B cell (primary cell): ENCODE measurements at regions of chr7 and their contacts with region 1.

Region 1: GRCh38 chr7:152463709-152464311 is 28.0 kb upstream of the KMT2C start:
- DNase-seq: peak; percentile 100
- ATAC-seq: peak; percentile 91
- H3K4me3 ChIP-seq: peak overlapping the region in 4 of 5 experiments; percentile 69 to 99 (median 86)
- H3K4me3 Mint-ChIP-seq: peak overlapping the region; percentile 96
- H3K27ac ChIP-seq: peak overlapping the region; percentile 87 to 96
- H3K27ac Mint-ChIP-seq: peak overlapping the region; percentile 70
- H3K4me1 ChIP-seq: peaks cover 20 to 24% of the 10 kb centered on the region in 2 donors
- H3K4me1 Mint-ChIP-seq: peaks cover 24% of the 10 kb centered on the region
- H3K27me3 ChIP-seq: no peaks in the 10 kb centered on the region
- H3K27me3 Mint-ChIP-seq: no peaks in the 10 kb centered on the region
- CTCF ChIP-seq: no peak

Region 2: GRCh38 chr7:152158801-152159587 is 304.8 kb before region 1 on chr7:
- CTCF ChIA-PET with region 1: no interaction called
- POLR2A ChIA-PET with region 1: no interaction called
- intact Hi-C with region 1: loop called (anchors 5 kb)
- DNase-seq: peak; percentile 86
- ATAC-seq: peak; percentile 90
- H3K4me3 ChIP-seq: peak overlapping the region in 3 of 5 experiments; percentile 18 to 48 (median 36)
- H3K4me3 Mint-ChIP-seq: peak overlapping the region; percentile 67
- H3K27ac ChIP-seq: peak overlapping the region; percentile 86 to 87
- H3K27ac Mint-ChIP-seq: peak overlapping the region; percentile 89
- H3K4me1 ChIP-seq: peaks cover 29 to 31% of the 10 kb centered on the region in 2 donors
- H3K4me1 Mint-ChIP-seq: peaks cover 40% of the 10 kb centered on the region
- H3K27me3 ChIP-seq: no peaks in the 10 kb centered on the region
- H3K27me3 Mint-ChIP-seq: no peaks in the 10 kb centered on the region
- CTCF ChIP-seq: no peak

Region 3: DNA sequence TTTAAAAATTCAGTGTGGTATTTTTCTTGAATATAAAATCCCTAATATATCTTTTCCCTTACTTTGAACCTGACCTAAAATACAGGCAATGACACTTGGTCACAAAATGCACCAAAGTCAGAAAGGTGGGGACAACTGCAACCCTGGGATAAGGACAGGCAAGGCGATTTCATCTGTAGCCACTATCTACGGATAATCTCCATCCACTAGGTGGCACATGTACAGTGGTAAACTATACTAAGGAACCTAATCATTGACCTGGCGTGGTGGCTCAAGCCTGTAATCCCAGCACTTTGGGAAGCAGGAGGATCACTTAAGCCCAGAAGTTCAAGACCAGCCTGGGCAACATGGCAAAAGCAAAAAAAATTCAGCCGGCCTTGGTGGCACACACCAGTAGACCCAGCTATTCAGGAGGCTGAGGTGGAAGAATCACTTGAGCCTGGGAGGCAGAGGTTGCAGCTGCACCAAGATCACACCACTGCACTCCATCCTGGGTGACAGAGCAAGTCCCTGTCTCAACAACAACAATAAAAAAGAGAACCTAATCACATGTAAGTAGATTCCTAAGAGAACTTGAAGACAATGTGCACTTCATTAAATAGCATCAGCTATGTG is 126.9 kb before region 1 on chr7:
- CTCF ChIA-PET with region 1: interaction called, 8 read pairs
- POLR2A ChIA-PET with region 1: interaction called, 4 read pairs
- intact Hi-C with region 1: loop called (anchors 5 kb)
- DNase-seq: peak; percentile 62
- ATAC-seq: peak; percentile 61
- H3K4me3 ChIP-seq: peak overlapping the region in 1 of 5 experiments; percentile 15
- H3K4me3 Mint-ChIP-seq: peak overlapping the region; percentile 16
- H3K27ac ChIP-seq: no peak overlapping the region
- H3K27ac Mint-ChIP-seq: peak overlapping the region; percentile 53
- H3K4me1 ChIP-seq: peaks cover 35 to 41% of the 10 kb centered on the region in 2 donors
- H3K4me1 Mint-ChIP-seq: peaks cover 57% of the 10 kb centered on the region
- H3K27me3 ChIP-seq: no peaks in the 10 kb centered on the region
- H3K27me3 Mint-ChIP-seq: no peaks in the 10 kb centered on the region
- CTCF ChIP-seq: peak; percentile 73

Region 4: GRCh38 chr7:152424348-152425108 is 39.3 kb before region 1 on chr7:
- CTCF ChIA-PET with region 1: no interaction called
- POLR2A ChIA-PET with region 1: no interaction called
- intact Hi-C with region 1: loop called (anchors 5 kb)
- DNase-seq: no peak
- ATAC-seq: no peak
- H3K4me3 ChIP-seq: no peak overlapping the region
- H3K4me3 Mint-ChIP-seq: peak overlapping the region; percentile 26
- H3K27ac ChIP-seq: no peak overlapping the region
- H3K27ac Mint-ChIP-seq: peak overlapping the region; percentile 21
- H3K4me1 ChIP-seq: peaks cover 23 to 30% of the 10 kb centered on the region in 2 donors
- H3K4me1 Mint-ChIP-seq: peaks cover 63% of the 10 kb centered on the region
- H3K27me3 ChIP-seq: no peaks in the 10 kb centered on the region
- H3K27me3 Mint-ChIP-seq: no peaks in the 10 kb centered on the region
- CTCF ChIP-seq: no peak

Region 5: GRCh38 chr7:152436111-152436930 is 27.5 kb before region 1 on chr7:
- CTCF ChIA-PET with region 1: no interaction called
- POLR2A ChIA-PET with region 1: interaction called, 25 read pairs
- intact Hi-C with region 1: loop called (anchors 1 kb)
- DNase-seq: peak; percentile 94
- ATAC-seq: peak; percentile 70
- H3K4me3 ChIP-seq: peak overlapping the region in 4 of 5 experiments; percentile 51 to 84 (median 68)
- H3K4me3 Mint-ChIP-seq: peak overlapping the region; percentile 89
- H3K27ac ChIP-seq: peak overlapping the region; percentile 76 to 89
- H3K27ac Mint-ChIP-seq: peak overlapping the region; percentile 93
- H3K4me1 ChIP-seq: peaks cover 12 to 13% of the 10 kb centered on the region in 2 donors
- H3K4me1 Mint-ChIP-seq: peaks cover 32% of the 10 kb centered on the region
- H3K27me3 ChIP-seq: no peaks in the 10 kb centered on the region
- H3K27me3 Mint-ChIP-seq: no peaks in the 10 kb centered on the region
- CTCF ChIP-seq: no peak

Region 6: GRCh38 chr7:152624228-152624627 is 160.4 kb after region 1 on chr7:
- CTCF ChIA-PET with region 1: no interaction called
- POLR2A ChIA-PET with region 1: no interaction called
- intact Hi-C with region 1: no loop called
- DNase-seq: no peak
- ATAC-seq: no peak
- H3K4me3 ChIP-seq: no peak overlapping the region
- H3K4me3 Mint-ChIP-seq: no peak overlapping the region
- H3K27ac ChIP-seq: no peak overlapping the region
- H3K27ac Mint-ChIP-seq: no peak overlapping the region
- H3K4me1 ChIP-seq: no peaks in the 10 kb centered on the region
- H3K4me1 Mint-ChIP-seq: no peaks in the 10 kb centered on the region
- H3K27me3 ChIP-seq: no peaks in the 10 kb centered on the region
- H3K27me3 Mint-ChIP-seq: no peaks in the 10 kb centered on the region
- CTCF ChIP-seq: no peak

Region 7: GRCh38 chr7:152675759-152676636 is 212.2 kb after region 1 on chr7 and contains the start of gene XRCC2:
- CTCF ChIA-PET with region 1: no interaction called
- POLR2A ChIA-PET with region 1: no interaction called
- intact Hi-C with region 1: loop called (anchors 1 kb)
- DNase-seq: peak; percentile 97
- ATAC-seq: peak; percentile 91
- H3K4me3 ChIP-seq: peak within 1 kb of the TSS; percentile 55 to 96 (median 77)
- H3K4me3 Mint-ChIP-seq: peak within 1 kb of the TSS; percentile 96
- H3K27ac ChIP-seq: peak within 1 kb of the TSS; percentile 58 to 90
- H3K27ac Mint-ChIP-seq: peak within 1 kb of the TSS; percentile 87
- H3K4me1 ChIP-seq: peaks cover 7 to 11% of the 10 kb centered on the region in 2 donors
- H3K4me1 Mint-ChIP-seq: peaks cover 11% of the 10 kb centered on the region
- H3K27me3 ChIP-seq: no peaks in the 10 kb centered on the region
- H3K27me3 Mint-ChIP-seq: no peaks in the 10 kb centered on the region
- CTCF ChIP-seq: no peak
- total RNA-seq, gene XRCC2: 1.2 and 1.5 TPM in 2 replicates